ENCODE measurements at regions of chr1 and their contacts with region 1.

Region 1: GRCh38 chr1:173212952-173213491 is 5.9 kb upstream of the TNFSF4 start:
- DNase-seq: no peak
- H3K4me3 ChIP-seq: no peak overlapping the region
- H3K27ac ChIP-seq: no peak overlapping the region
- H3K4me1 ChIP-seq: no peaks in the 10 kb centered on the region
- H3K27me3 ChIP-seq: no peaks in the 10 kb centered on the region
- CTCF ChIP-seq: no peak

Region 2: GRCh38 chr1:172745014-172745413 is 468.0 kb before region 1 on chr1:
- intact Hi-C with region 1: loop called (anchors 5 kb)
- DNase-seq: no peak
- H3K4me3 ChIP-seq: no peak overlapping the region
- H3K27ac ChIP-seq: no peak overlapping the region
- H3K4me1 ChIP-seq: no peaks in the 10 kb centered on the region
- H3K27me3 ChIP-seq: no peaks in the 10 kb centered on the region
- CTCF ChIP-seq: peak; percentile 29 to 42 (median 42)

Region 3: GRCh38 chr1:173330149-173330951 is 117.3 kb after region 1 on chr1:
- intact Hi-C with region 1: no loop called
- DNase-seq: no peak
- H3K4me3 ChIP-seq: no peak overlapping the region
- H3K27ac ChIP-seq: no peak overlapping the region
- H3K4me1 ChIP-seq: peaks cover 0 to 3% of the 10 kb centered on the region in 2 donors
- H3K27me3 ChIP-seq: no peaks in the 10 kb centered on the region
- CTCF ChIP-seq: no peak